Astrocyte of the cerebellum (primary cell): ENCODE measurements at regions of chr15 and their contacts with region 1.

Region 1: GRCh38 chr15:56192659-56193442 is 50.8 kb downstream of the RFX7 start:
- DNase-seq: no peak
- H3K4me3 ChIP-seq: no peak overlapping the region
- CTCF ChIP-seq: no peak

Region 2: GRCh38 chr15:55999636-56000035 is 193.2 kb before region 1 on chr15:
- in situ Hi-C with region 1: loop called (anchors 5 kb)
- DNase-seq: no peak
- H3K4me3 ChIP-seq: no peak overlapping the region
- CTCF ChIP-seq: no peak